ENCODE measurements at regions of chr6 and their contacts with region 1.

Region 1: GRCh38 chr6:100464903-100465700 is at the start of gene SIM1:
- DNase-seq: peak; percentile 91
- H3K4me3 ChIP-seq: peak within 1 kb of the TSS; percentile 25 to 51 (median 44)
- H3K27ac ChIP-seq: no peak within 1 kb of the TSS
- H3K4me1 ChIP-seq: peaks cover 21% of the 10 kb centered on the region
- H3K27me3 ChIP-seq: peaks cover 85 to 100% of the 10 kb centered on the region in 2 experiments
- CTCF ChIP-seq: no peak
- POLR2A ChIP-seq: no peak
- total RNA-seq, gene SIM1: 0.29 and 0.39 TPM in 2 replicates

Region 2: GRCh38 chr6:100105138-100105753 is 359.9 kb before region 1 on chr6:
- CTCF ChIA-PET with region 1: interaction called, 12 read pairs
- POLR2A ChIA-PET with region 1: no interaction called
- dilution Hi-C with region 1: loop called (anchors 25 kb)
- intact Hi-C with region 1: no loop called
- DNase-seq: no peak
- H3K4me3 ChIP-seq: no peak overlapping the region
- H3K27ac ChIP-seq: no peak overlapping the region
- H3K4me1 ChIP-seq: no peaks in the 10 kb centered on the region
- H3K27me3 ChIP-seq: peaks cover 11 to 25% of the 10 kb centered on the region in 2 experiments
- CTCF ChIP-seq: no peak
- POLR2A ChIP-seq: no peak

Region 3: DNA sequence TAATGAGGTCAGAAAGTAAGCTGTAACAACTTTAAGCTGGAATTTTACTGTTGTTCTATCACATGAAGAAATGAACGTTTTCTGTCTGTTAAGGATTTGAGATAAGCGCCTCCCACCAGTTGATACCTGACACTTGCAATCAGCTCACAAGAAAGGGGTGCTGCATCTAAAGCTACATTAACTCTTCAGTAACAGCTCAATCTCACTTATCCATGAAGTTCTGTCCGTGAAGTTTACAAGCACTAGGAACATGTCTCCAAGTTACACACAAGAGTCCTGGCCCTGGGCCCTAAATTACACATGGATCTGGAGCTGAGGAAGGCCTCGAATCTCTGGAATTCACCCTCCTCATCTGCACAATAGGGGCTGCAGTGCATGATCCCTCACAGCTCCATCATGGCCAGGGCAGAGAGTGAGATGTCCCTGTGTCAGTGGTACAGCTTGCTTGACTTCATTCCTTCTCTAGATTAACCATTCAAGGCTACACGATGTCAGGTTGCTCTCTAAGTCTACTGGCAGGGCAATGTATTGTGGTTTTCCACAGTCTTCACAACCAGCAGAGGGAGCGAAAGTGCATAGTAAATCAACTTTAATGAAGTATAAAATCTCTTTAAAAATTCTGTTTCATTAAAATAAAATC is 288.7 kb before region 1 on chr6:
- CTCF ChIA-PET with region 1: interaction called, 72 read pairs
- POLR2A ChIA-PET with region 1: no interaction called
- dilution Hi-C with region 1: no loop called
- intact Hi-C with region 1: loop called (anchors 5 kb)
- DNase-seq: peak; percentile 54
- H3K4me3 ChIP-seq: no peak overlapping the region
- H3K27ac ChIP-seq: no peak overlapping the region
- H3K4me1 ChIP-seq: no peaks in the 10 kb centered on the region
- H3K27me3 ChIP-seq: no peaks in the 10 kb centered on the region
- CTCF ChIP-seq: peak; percentile 29 to 33
- POLR2A ChIP-seq: no peak

Region 4: DNA sequence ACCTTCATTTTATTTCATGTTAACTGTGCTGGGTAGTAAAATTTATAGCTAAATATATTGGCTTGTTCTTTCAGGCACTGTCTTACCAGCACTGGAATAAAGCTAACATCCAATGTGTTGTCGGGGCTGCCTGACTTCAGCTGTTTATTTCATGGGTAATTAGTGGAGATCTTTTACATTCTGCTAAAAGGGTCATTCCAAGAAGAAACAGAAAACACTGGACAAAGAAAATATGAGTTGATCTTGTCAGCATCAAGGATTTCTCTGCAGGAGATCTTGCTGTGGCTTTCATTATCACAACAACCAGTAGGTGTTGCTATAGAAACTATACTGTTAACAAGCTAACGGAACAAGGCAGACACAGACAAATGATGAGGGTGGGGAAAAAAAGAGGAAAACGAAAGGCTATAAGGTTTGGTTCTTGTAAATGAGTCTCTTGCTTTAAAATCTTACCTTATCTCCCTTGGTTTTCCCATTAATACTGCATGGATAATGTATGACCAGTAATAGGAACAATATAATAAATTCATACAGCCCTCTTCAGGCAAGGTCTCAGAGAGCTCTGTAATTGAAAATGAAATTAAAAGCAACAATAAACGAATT is 207.2 kb before region 1 on chr6:
- CTCF ChIA-PET with region 1: interaction called, 34 read pairs
- POLR2A ChIA-PET with region 1: no interaction called
- dilution Hi-C with region 1: no loop called
- intact Hi-C with region 1: loop called (anchors 2 kb)
- DNase-seq: peak; percentile 75
- H3K4me3 ChIP-seq: peak overlapping the region in 2 of 3 experiments; percentile 7 to 50
- H3K27ac ChIP-seq: peak overlapping the region; percentile 50
- H3K4me1 ChIP-seq: peaks cover 12% of the 10 kb centered on the region
- H3K27me3 ChIP-seq: no peaks in the 10 kb centered on the region
- CTCF ChIP-seq: no peak
- POLR2A ChIP-seq: no peak

Region 5: GRCh38 chr6:100300221-100300736 is 164.8 kb before region 1 on chr6:
- CTCF ChIA-PET with region 1: interaction called, 9 read pairs
- POLR2A ChIA-PET with region 1: interaction called, 3 read pairs
- dilution Hi-C with region 1: no loop called
- intact Hi-C with region 1: loop called (anchors 2 kb)
- DNase-seq: peak; percentile 85
- H3K4me3 ChIP-seq: no peak overlapping the region
- H3K27ac ChIP-seq: peak overlapping the region; percentile 100
- H3K4me1 ChIP-seq: peaks cover 74% of the 10 kb centered on the region
- H3K27me3 ChIP-seq: no peaks in the 10 kb centered on the region
- CTCF ChIP-seq: no peak
- POLR2A ChIP-seq: peak; percentile 29

Region 6: DNA sequence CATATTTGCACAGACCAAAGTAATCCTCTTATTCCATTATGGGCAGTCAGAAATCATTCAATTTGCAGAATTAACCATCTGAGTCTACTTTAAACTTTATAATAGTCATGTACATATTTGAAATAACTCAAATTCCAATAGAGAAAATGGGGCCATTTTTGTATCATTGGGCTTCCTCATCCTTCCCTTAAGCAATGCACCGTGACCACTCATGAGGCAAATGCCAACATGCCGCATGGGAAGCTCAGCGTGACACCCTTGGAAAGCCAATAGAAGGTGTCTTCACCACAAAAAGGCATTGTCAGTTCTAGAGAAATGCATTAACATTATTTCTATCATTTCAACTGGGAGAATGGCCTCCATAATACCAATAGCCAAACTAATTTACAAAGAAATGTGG is 38.9 kb before region 1 on chr6:
- CTCF ChIA-PET with region 1: no interaction called
- POLR2A ChIA-PET with region 1: no interaction called
- dilution Hi-C with region 1: no loop called
- intact Hi-C with region 1: no loop called
- DNase-seq: no peak
- H3K4me3 ChIP-seq: no peak overlapping the region
- H3K27ac ChIP-seq: no peak overlapping the region
- H3K4me1 ChIP-seq: no peaks in the 10 kb centered on the region
- H3K27me3 ChIP-seq: no peaks in the 10 kb centered on the region
- CTCF ChIP-seq: no peak
- POLR2A ChIP-seq: no peak

Region 7: GRCh38 chr6:100447081-100447899 is 17.8 kb before region 1 on chr6:
- CTCF ChIA-PET with region 1: interaction called, 17 read pairs
- POLR2A ChIA-PET with region 1: no interaction called
- dilution Hi-C with region 1: no loop called
- intact Hi-C with region 1: no loop called
- DNase-seq: no peak
- H3K4me3 ChIP-seq: peak overlapping the region in 2 of 3 experiments; percentile 12 to 23
- H3K27ac ChIP-seq: no peak overlapping the region
- H3K4me1 ChIP-seq: peaks cover 11% of the 10 kb centered on the region
- H3K27me3 ChIP-seq: peaks cover 36 to 56% of the 10 kb centered on the region in 2 experiments
- CTCF ChIP-seq: no peak
- POLR2A ChIP-seq: no peak